WTC11 (cell line): ENCODE measurements at regions of chr12 and their contacts with region 1.

Region 1: GRCh38 chr12:120249875-120250795 is 15.4 kb downstream of the PXN start:
- DNase-seq: no peak
- ATAC-seq: no peak
- H3K4me3 Mint-ChIP-seq: no peak overlapping the region
- H3K27ac Mint-ChIP-seq: peak overlapping the region; percentile 46
- H3K4me1 Mint-ChIP-seq: peaks cover 46% of the 10 kb centered on the region
- H3K27me3 Mint-ChIP-seq: no peaks in the 10 kb centered on the region
- CTCF ChIP-seq: no peak

Region 2: GRCh38 chr12:120037851-120038250 is 212.3 kb before region 1 on chr12:
- CTCF ChIA-PET with region 1: no interaction called
- POLR2A ChIA-PET with region 1: no interaction called
- DNase-seq: no peak
- ATAC-seq: no peak
- H3K4me3 Mint-ChIP-seq: no peak overlapping the region
- H3K27ac Mint-ChIP-seq: no peak overlapping the region
- H3K4me1 Mint-ChIP-seq: peaks cover 19% of the 10 kb centered on the region
- H3K27me3 Mint-ChIP-seq: no peaks in the 10 kb centered on the region
- CTCF ChIP-seq: no peak

Region 3: DNA sequence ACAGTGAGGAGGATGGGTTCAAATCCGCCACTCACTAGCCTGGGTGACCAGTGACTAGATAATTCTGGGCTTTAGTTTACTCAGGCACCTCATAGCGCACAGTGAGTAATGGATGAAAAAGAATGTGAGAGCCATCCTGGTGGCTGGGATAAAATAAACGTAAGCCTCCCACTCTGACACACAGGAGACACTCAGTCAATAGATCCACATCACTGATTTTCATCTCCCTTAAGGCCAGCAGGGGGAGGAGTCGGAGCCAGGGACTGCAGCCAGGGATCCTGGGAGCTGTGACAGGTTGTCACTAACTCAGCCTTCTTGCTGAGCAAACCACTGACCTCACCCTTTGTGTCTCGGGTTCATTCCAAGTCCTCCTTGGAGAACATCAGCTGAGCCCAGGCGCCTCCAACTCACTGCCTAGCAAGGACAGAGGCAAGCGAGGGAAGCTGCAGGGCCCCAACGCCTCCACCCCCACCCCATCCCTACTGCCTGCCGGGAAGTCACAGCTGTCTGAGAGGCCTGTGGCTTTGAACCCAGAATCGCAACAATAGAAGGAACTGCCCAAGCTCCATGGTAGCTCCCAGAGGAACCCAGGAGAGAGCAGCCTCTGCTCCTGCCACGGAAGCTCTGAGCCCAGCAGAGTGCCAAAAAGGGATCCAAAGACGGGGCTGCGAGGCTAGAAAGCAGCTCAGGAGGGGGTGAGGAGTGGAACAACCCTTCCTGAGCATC is 15.3 kb before region 1 on chr12:
- CTCF ChIA-PET with region 1: interaction called, 717 read pairs
- POLR2A ChIA-PET with region 1: interaction called, 4 read pairs
- DNase-seq: peak; percentile 36
- ATAC-seq: peak; percentile 2
- H3K4me3 Mint-ChIP-seq: no peak overlapping the region
- H3K27ac Mint-ChIP-seq: peak overlapping the region; percentile 80
- H3K4me1 Mint-ChIP-seq: peaks cover 73% of the 10 kb centered on the region
- H3K27me3 Mint-ChIP-seq: no peaks in the 10 kb centered on the region
- CTCF ChIP-seq: no peak